ENCODE measurements at regions of chr15 and their contacts with region 1.

Region 1: GRCh38 chr15:35912196-35912595 is 366.2 kb upstream of the DPH6 start:
- DNase-seq: no peak
- ATAC-seq: peak; percentile 55 to 82 (median 76)
- H3K4me3 ChIP-seq: no peak overlapping the region
- H3K27ac ChIP-seq: no peak overlapping the region
- H3K4me1 ChIP-seq: peaks cover 0 to 10% (median 0%) of the 10 kb centered on the region in 12 donors
- H3K27me3 ChIP-seq: no peaks in the 10 kb centered on the region
- CTCF ChIP-seq: peak in 10 of 12 donors; percentile 21 to 54 (median 38)
- POLR2A ChIP-seq: no peak

Region 2: GRCh38 chr15:35751413-35752133 is 160.6 kb before region 1 on chr15:
- intact Hi-C with region 1: loop called in 8 of 10 experiments (anchors 2 to 10 kb)
- DNase-seq: peak in 4 of 5 donors; percentile 66 to 80 (median 72)
- ATAC-seq: peak; percentile 79 to 91 (median 86)
- H3K4me3 ChIP-seq: peak overlapping the region in 2 of 12 donors; percentile 6 to 13
- H3K27ac ChIP-seq: no peak overlapping the region
- H3K4me1 ChIP-seq: peaks cover 0 to 21% (median 0%) of the 10 kb centered on the region in 12 donors
- H3K27me3 ChIP-seq: no peaks in the 10 kb centered on the region
- CTCF ChIP-seq: peak; percentile 57 to 84 (median 78)
- POLR2A ChIP-seq: no peak